Heart left ventricle (tissue), 16 donors: ENCODE measurements at regions of chr11 and their contacts with region 1.

Region 1: GRCh38 chr11:121655537-121656327 is 203.0 kb upstream of the SORL1-AS1 start:
- DNase-seq: peak; percentile 87 to 93 (median 91)
- ATAC-seq: peak; percentile 90 to 96 (median 94)
- H3K4me3 ChIP-seq: peak overlapping the region; percentile 12 to 62 (median 50)
- H3K27ac ChIP-seq: peak overlapping the region; percentile 82 to 96 (median 93)
- H3K4me1 ChIP-seq: peaks cover 0 to 21% (median 12%) of the 10 kb centered on the region in 12 donors
- H3K27me3 ChIP-seq: no peaks in the 10 kb centered on the region
- CTCF ChIP-seq: peak; percentile 76 to 89 (median 84)
- POLR2A ChIP-seq: no peak

Region 2: GRCh38 chr11:121722431-121723245 is 66.9 kb after region 1 on chr11:
- intact Hi-C with region 1: loop called in 1 of 10 experiments (anchors 10 kb)
- DNase-seq: peak; percentile 78 to 90 (median 86)
- ATAC-seq: peak; percentile 91 to 97 (median 96)
- H3K4me3 ChIP-seq: peak overlapping the region in 11 of 12 donors; percentile 30 to 61 (median 50)
- H3K27ac ChIP-seq: peak overlapping the region; percentile 49 to 91 (median 84)
- H3K4me1 ChIP-seq: peaks cover 0 to 16% (median 4%) of the 10 kb centered on the region in 12 donors
- H3K27me3 ChIP-seq: peaks cover 0 to 7% (median 0%) of the 10 kb centered on the region in 9 donors
- CTCF ChIP-seq: peak in 5 of 12 donors; percentile 9 to 30 (median 12)
- POLR2A ChIP-seq: no peak

Region 3: GRCh38 chr11:121841487-121842191 is 185.9 kb after region 1 on chr11:
- intact Hi-C with region 1: no loop called
- DNase-seq: no peak
- ATAC-seq: no peak
- H3K4me3 ChIP-seq: no peak overlapping the region
- H3K27ac ChIP-seq: no peak overlapping the region
- H3K4me1 ChIP-seq: no peaks in the 10 kb centered on the region
- H3K27me3 ChIP-seq: no peaks in the 10 kb centered on the region
- CTCF ChIP-seq: no peak
- POLR2A ChIP-seq: no peak

Region 4: GRCh38 chr11:121870206-121871045 is 214.7 kb after region 1 on chr11:
- intact Hi-C with region 1: loop called in 1 of 10 experiments (anchors 5 kb)
- DNase-seq: peak in 1 of 5 donors; percentile 14
- ATAC-seq: peak; percentile 41 to 73 (median 63)
- H3K4me3 ChIP-seq: no peak overlapping the region
- H3K27ac ChIP-seq: peak overlapping the region in 9 of 12 donors; percentile 6 to 57 (median 23)
- H3K4me1 ChIP-seq: peaks cover 0 to 13% (median 2%) of the 10 kb centered on the region in 12 donors
- H3K27me3 ChIP-seq: no peaks in the 10 kb centered on the region
- CTCF ChIP-seq: peak in 3 of 12 donors; percentile 9 to 18 (median 14)
- POLR2A ChIP-seq: no peak

Region 5: GRCh38 chr11:122101625-122102291 is 446.0 kb after region 1 on chr11:
- intact Hi-C with region 1: loop called (anchors 1 to 5 kb)
- DNase-seq: peak; percentile 66 to 76 (median 67)
- ATAC-seq: peak; percentile 82 to 89 (median 88)
- H3K4me3 ChIP-seq: peak overlapping the region; percentile 34 to 81 (median 61)
- H3K27ac ChIP-seq: peak overlapping the region; percentile 70 to 95 (median 89)
- H3K4me1 ChIP-seq: peaks cover 0 to 25% (median 6%) of the 10 kb centered on the region in 12 donors
- H3K27me3 ChIP-seq: peaks cover 0 to 29% (median 4%) of the 10 kb centered on the region in 9 donors
- CTCF ChIP-seq: peak; percentile 35 to 80 (median 61)
- POLR2A ChIP-seq: no peak

Region 6: GRCh38 chr11:122293296-122294023 is 637.7 kb after region 1 on chr11:
- intact Hi-C with region 1: loop called in 1 of 10 experiments (anchors 10 kb)
- DNase-seq: no peak
- ATAC-seq: peak in 3 of 4 donors; percentile 51 to 69 (median 61)
- H3K4me3 ChIP-seq: no peak overlapping the region
- H3K27ac ChIP-seq: peak overlapping the region in 2 of 12 donors; percentile 12 to 13
- H3K4me1 ChIP-seq: peaks cover 0 to 4% (median 0%) of the 10 kb centered on the region in 12 donors
- H3K27me3 ChIP-seq: no peaks in the 10 kb centered on the region
- CTCF ChIP-seq: peak in 10 of 12 donors; percentile 29 to 60 (median 42)
- POLR2A ChIP-seq: no peak

Region 7: GRCh38 chr11:122505304-122506006 is 849.7 kb after region 1 on chr11:
- intact Hi-C with region 1: loop called (anchors 1 to 5 kb)
- DNase-seq: peak; percentile 79 to 82 (median 80)
- ATAC-seq: peak; percentile 91 to 99 (median 98)
- H3K4me3 ChIP-seq: no peak overlapping the region
- H3K27ac ChIP-seq: no peak overlapping the region
- H3K4me1 ChIP-seq: peaks cover 0 to 11% (median 4%) of the 10 kb centered on the region in 12 donors
- H3K27me3 ChIP-seq: no peaks in the 10 kb centered on the region
- CTCF ChIP-seq: peak; percentile 73 to 93 (median 87)
- POLR2A ChIP-seq: no peak